GM12878 (cell line): ENCODE measurements at regions of chr3 and their contacts with region 1.

Region 1: DNA sequence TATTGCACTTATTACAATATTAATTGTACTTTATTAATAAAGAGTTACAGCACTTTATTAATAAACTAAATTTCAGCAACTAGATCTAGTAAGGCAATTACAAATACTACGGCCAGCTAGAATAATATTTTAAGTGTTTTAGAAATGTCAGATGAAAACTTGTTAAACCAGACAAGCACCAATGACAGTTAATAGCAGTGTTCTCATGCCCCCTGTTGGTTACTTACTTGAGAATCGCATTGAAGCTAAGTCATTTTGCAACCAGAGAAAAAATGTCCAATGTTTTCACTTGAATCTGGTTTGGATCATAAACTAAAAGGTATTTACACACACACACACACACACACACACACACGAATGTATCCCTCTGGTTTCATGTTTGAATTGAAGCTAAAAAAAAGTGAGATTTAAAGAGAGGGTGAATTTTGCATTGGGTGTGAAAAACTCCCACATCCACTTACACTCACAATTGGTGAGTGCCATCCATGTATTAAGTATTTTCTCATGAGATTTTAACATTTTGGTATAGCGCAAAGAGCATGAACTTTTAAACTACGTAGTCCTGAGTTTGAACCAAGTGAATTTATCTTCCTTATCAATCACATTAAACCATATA is 347.7 kb downstream of the ZBBX start:
- DNase-seq: no peak
- ATAC-seq: peak; percentile 54; the same call in 1 of the 3 replicates
- H3K4me3 ChIP-seq: no peak overlapping the region
- H3K27ac ChIP-seq: no peak overlapping the region
- H3K4me1 ChIP-seq: no peaks in the 10 kb centered on the region
- H3K27me3 ChIP-seq: no peaks in the 10 kb centered on the region
- CTCF ChIP-seq: peak; percentile 32 to 52 (median 38); a peak in 4 of 6 replicates
- EP300 ChIP-seq: no peak
- POLR2A ChIP-seq: no peak
- RAD21 ChIP-seq: peak; percentile 58

Region 2: GRCh38 chr3:165854696-165855095 is 1177.7 kb before region 1 on chr3:
- CTCF ChIA-PET with region 1: no interaction called
- POLR2A ChIA-PET with region 1: no interaction called
- RAD21 ChIA-PET with region 1: no interaction called
- SMC1A ChIA-PET with region 1: no interaction called
- in situ Hi-C with region 1: no loop called
- intact Hi-C with region 1: loop called (anchors 2 kb)
- DNase-seq: no peak
- ATAC-seq: peak; percentile 48
- H3K4me3 ChIP-seq: no peak overlapping the region
- H3K27ac ChIP-seq: no peak overlapping the region
- H3K4me1 ChIP-seq: no peaks in the 10 kb centered on the region
- H3K27me3 ChIP-seq: no peaks in the 10 kb centered on the region
- CTCF ChIP-seq: peak; percentile 35 to 50 (median 48); a peak in 4 of 6 replicates
- EP300 ChIP-seq: no peak
- POLR2A ChIP-seq: no peak
- RAD21 ChIP-seq: 0 out of 2 replicates have a peak, but pooled peaks have one; percentile 20

Region 3: DNA sequence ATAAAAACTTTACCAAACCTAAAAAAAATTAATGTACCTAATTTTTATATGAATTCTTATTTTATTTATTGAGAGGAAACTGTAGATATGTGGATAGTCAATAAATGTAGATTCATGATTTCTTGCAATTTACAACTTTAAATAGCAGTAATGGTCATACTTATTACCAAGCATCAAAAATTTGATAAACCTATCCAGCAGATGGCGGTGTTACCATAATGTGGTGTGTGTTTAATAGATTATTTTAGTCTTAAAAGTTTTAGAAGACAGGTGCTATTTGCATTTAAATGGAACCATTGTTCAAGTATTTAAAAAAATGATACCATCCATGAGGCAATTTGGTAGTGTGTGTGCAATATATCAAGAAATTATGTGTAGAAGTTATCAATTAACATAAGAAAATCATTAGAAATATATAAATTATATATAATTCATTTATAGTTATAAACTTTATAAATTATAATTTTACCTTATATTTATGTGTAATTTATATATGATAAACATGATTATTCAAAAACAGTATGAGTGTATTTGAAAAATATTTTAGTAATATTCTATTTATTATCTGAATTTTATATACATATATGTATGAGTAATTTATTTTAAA is 1019.2 kb before region 1 on chr3:
- CTCF ChIA-PET with region 1: no interaction called
- POLR2A ChIA-PET with region 1: no interaction called
- RAD21 ChIA-PET with region 1: no interaction called
- SMC1A ChIA-PET with region 1: no interaction called
- in situ Hi-C with region 1: no loop called
- intact Hi-C with region 1: loop called (anchors 5 kb)
- DNase-seq: no peak
- ATAC-seq: peak; percentile 66
- H3K4me3 ChIP-seq: no peak overlapping the region
- H3K27ac ChIP-seq: no peak overlapping the region
- H3K4me1 ChIP-seq: no peaks in the 10 kb centered on the region
- H3K27me3 ChIP-seq: no peaks in the 10 kb centered on the region
- CTCF ChIP-seq: peak; percentile 19 to 44 (median 29); a peak in 4 of 6 replicates
- EP300 ChIP-seq: no peak
- POLR2A ChIP-seq: no peak
- RAD21 ChIP-seq: peak; percentile 29; the same call in 1 of the 2 replicates

Region 4: GRCh38 chr3:166837535-166837934 is 194.8 kb before region 1 on chr3:
- CTCF ChIA-PET with region 1: interaction called, 23 read pairs
- POLR2A ChIA-PET with region 1: no interaction called
- RAD21 ChIA-PET with region 1: interaction called, 12 read pairs
- SMC1A ChIA-PET with region 1: interaction called, 3 read pairs
- in situ Hi-C with region 1: no loop called
- intact Hi-C with region 1: loop called (anchors 2 kb)
- DNase-seq: no peak
- ATAC-seq: peak; percentile 93
- H3K4me3 ChIP-seq: no peak overlapping the region
- H3K27ac ChIP-seq: no peak overlapping the region
- H3K4me1 ChIP-seq: no peaks in the 10 kb centered on the region
- H3K27me3 ChIP-seq: no peaks in the 10 kb centered on the region
- CTCF ChIP-seq: peak in 2 of 3 experiments; percentile 36 to 52; a peak in 3 of 6 replicates
- EP300 ChIP-seq: no peak
- POLR2A ChIP-seq: no peak
- RAD21 ChIP-seq: peak; percentile 13; the same call in 1 of the 2 replicates

Region 5: GRCh38 chr3:166877971-166878370 is 154.4 kb before region 1 on chr3:
- CTCF ChIA-PET with region 1: no interaction called
- POLR2A ChIA-PET with region 1: no interaction called
- RAD21 ChIA-PET with region 1: no interaction called
- SMC1A ChIA-PET with region 1: no interaction called
- in situ Hi-C with region 1: no loop called
- intact Hi-C with region 1: no loop called
- DNase-seq: no peak
- ATAC-seq: no peak
- H3K4me3 ChIP-seq: no peak overlapping the region
- H3K27ac ChIP-seq: no peak overlapping the region
- H3K4me1 ChIP-seq: no peaks in the 10 kb centered on the region
- H3K27me3 ChIP-seq: no peaks in the 10 kb centered on the region
- CTCF ChIP-seq: no peak
- EP300 ChIP-seq: no peak
- POLR2A ChIP-seq: no peak
- RAD21 ChIP-seq: no peak

Region 6: DNA sequence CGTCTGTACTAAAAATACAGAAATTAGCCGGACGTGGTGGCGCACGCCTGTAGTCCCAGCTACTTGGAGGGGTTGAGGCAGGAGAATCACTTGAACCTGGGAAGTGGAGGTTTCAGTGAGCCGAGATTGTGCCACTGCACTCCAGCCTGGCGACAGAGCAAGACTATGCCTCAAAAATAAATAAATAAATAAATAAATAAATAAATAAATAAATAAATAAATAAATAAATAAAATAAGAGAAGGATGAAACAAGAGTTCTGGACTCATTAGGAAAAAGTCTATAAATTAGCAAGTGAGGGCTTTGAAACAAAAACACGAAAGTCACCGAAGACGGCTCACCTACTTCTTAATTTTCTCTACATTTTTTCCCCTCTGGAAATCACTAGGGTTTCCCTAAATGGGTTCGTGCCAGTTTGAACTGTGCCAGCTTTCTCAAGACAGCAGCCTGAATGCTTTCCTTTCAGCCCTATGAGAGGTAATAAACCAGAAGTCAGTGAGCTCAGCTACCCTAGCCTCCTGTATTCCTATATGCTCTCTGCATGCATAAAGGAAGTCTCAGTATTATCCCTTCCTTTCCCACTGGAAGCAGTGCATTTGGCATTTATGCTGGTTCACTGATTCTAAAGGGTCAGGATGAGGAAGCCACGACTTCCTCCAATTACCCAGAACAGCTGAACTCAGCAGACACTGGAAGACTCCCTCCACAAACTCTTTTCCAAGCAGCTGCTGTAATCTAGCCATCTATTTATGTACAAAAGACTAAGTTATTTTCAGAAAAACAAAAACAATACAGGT is 80.9 kb after region 1 on chr3:
- CTCF ChIA-PET with region 1: no interaction called
- POLR2A ChIA-PET with region 1: no interaction called
- RAD21 ChIA-PET with region 1: no interaction called
- SMC1A ChIA-PET with region 1: no interaction called
- in situ Hi-C with region 1: no loop called
- intact Hi-C with region 1: no loop called
- DNase-seq: no peak
- ATAC-seq: no peak
- H3K4me3 ChIP-seq: no peak overlapping the region
- H3K27ac ChIP-seq: no peak overlapping the region
- H3K4me1 ChIP-seq: no peaks in the 10 kb centered on the region
- H3K27me3 ChIP-seq: no peaks in the 10 kb centered on the region
- CTCF ChIP-seq: no peak
- EP300 ChIP-seq: no peak
- POLR2A ChIP-seq: no peak
- RAD21 ChIP-seq: no peak